GM12878 (cell line): ENCODE measurements at regions of chr2 and their contacts with region 1.

Region 1: DNA sequence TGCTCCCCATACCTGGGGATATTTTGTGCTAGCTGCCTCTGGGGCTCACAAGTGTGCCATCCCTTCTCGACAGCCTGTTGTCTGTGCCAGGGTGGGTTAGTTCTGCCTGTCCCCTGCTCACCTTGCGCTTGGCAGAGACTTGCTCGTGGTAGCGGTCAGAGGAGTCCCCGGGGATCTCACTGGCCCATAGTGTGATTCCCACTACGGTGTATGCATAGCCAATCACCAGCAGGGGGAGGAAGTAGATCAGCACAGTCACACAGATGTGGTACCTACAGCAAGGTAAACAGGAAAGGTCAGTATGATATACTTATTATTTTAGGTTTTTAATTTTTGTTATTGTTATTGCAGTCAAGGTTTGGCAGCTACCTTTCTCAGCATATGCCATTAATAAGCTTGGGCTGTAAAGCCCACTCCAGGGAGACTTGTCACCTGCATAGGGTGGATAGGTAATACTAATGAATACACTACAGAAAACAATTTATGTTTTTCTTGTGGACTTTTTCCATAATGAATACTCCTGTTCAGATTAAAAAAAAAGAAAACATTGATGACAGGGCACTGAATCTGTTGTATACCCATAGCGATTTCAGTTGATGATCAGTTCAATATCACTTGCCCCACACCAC is 95.2 kb downstream of the POLE4 start:
- DNase-seq: peak; percentile 69
- ATAC-seq: peak; percentile 78
- H3K4me3 ChIP-seq: no peak overlapping the region
- H3K27ac ChIP-seq: no peak overlapping the region
- H3K4me1 ChIP-seq: peaks cover 22% of the 10 kb centered on the region
- H3K27me3 ChIP-seq: no peaks in the 10 kb centered on the region
- CTCF ChIP-seq: peak; percentile 80 to 92 (median 88); a peak in 5 of 6 replicates
- EP300 ChIP-seq: no peak
- POLR2A ChIP-seq: no peak
- RAD21 ChIP-seq: peak; percentile 92

Region 2: GRCh38 chr2:74845217-74846011 is 208.2 kb before region 1 on chr2:
- CTCF ChIA-PET with region 1: no interaction called
- POLR2A ChIA-PET with region 1: no interaction called
- RAD21 ChIA-PET with region 1: no interaction called
- SMC1A ChIA-PET with region 1: no interaction called
- in situ Hi-C with region 1: no loop called
- intact Hi-C with region 1: no loop called
- DNase-seq: no peak
- ATAC-seq: no peak
- H3K4me3 ChIP-seq: no peak overlapping the region
- H3K27ac ChIP-seq: no peak overlapping the region
- H3K4me1 ChIP-seq: peaks cover 69% of the 10 kb centered on the region
- H3K27me3 ChIP-seq: no peaks in the 10 kb centered on the region
- CTCF ChIP-seq: no peak
- EP300 ChIP-seq: no peak
- POLR2A ChIP-seq: no peak
- RAD21 ChIP-seq: no peak

Region 3: DNA sequence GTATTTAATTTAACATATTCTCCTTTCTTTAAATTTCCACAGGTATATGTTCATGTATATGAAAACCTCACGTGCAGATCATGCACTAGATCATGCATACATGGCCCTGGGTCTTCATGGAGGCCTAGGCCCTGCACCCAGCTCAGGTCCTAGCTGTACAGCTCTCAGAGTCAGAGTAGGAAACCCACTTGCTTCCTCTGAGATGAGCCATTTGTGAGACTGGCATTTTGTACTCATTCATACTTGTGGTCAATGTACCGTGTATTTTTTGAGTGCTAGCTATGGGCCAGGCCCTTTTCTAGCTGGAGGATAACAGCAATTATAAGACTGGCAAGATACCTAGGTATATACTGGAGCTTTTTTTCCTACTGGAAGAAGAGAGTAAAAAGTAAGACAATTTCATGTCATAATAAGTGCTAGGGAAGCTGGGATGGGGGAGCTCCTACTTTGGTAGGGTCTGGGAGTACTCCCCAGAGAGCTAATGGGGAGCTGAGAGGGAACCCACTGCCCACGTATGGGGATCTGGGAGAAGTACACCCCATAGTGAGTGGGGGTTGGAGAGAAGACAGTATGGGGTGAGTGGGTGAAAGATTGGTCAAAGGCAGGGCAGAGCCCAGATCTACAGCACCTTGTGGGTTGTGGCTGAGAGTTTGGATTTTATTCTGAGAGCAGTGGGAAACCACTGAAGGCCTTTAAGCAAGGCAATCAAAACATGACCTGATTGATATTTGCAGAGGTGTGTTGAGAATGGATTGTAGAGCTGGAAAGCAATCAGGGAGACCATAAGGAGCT is 23.2 kb before region 1 on chr2:
- CTCF ChIA-PET with region 1: interaction called, 10 read pairs
- POLR2A ChIA-PET with region 1: no interaction called
- RAD21 ChIA-PET with region 1: no interaction called
- SMC1A ChIA-PET with region 1: interaction called, 3 read pairs
- in situ Hi-C with region 1: no loop called
- intact Hi-C with region 1: no loop called
- DNase-seq: no peak
- ATAC-seq: peak; percentile 63
- H3K4me3 ChIP-seq: no peak overlapping the region
- H3K27ac ChIP-seq: no peak overlapping the region
- H3K4me1 ChIP-seq: peaks cover 6% of the 10 kb centered on the region; the same call in 1 of the 2 replicates
- H3K27me3 ChIP-seq: no peaks in the 10 kb centered on the region
- CTCF ChIP-seq: no peak
- EP300 ChIP-seq: no peak
- POLR2A ChIP-seq: no peak
- RAD21 ChIP-seq: no peak

Region 4: GRCh38 chr2:75076088-75076487 is 22.5 kb after region 1 on chr2:
- CTCF ChIA-PET with region 1: interaction called, 16 read pairs
- POLR2A ChIA-PET with region 1: interaction called, 8 read pairs
- RAD21 ChIA-PET with region 1: interaction called, 50 read pairs
- SMC1A ChIA-PET with region 1: interaction called, 39 read pairs
- in situ Hi-C with region 1: no loop called
- intact Hi-C with region 1: no loop called
- DNase-seq: no peak
- ATAC-seq: no peak
- H3K4me3 ChIP-seq: no peak overlapping the region
- H3K27ac ChIP-seq: no peak overlapping the region
- H3K4me1 ChIP-seq: peaks cover 8% of the 10 kb centered on the region
- H3K27me3 ChIP-seq: no peaks in the 10 kb centered on the region
- CTCF ChIP-seq: no peak
- EP300 ChIP-seq: no peak
- POLR2A ChIP-seq: no peak
- RAD21 ChIP-seq: no peak

Region 5: DNA sequence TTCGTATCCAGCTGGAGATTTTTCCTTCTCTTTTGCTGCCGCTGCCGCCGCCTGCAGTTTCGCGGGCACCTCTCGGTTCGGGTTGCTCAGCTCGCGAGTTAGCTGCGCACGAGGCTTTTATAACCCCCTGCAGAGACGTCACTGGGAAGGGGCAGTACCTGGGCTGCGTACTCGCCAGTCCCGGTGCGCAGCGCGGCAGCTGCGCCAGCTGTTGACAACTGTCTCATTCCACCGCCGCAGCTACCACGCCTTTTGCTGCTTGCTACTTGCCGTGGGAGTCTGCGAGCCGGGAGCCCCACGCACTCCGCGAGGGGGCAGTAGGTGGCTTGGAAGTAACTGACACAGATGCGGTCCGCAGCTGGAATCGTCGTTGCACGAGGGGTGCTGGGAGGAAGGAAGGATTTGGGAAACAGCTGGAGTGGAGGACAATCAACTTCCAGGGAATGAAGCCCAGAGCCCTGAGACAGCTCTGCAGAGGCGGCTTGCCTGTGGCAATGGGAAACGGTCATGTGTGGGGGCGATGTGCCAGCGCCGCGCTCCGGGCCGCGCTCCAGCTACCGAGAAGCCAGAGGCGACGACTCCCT is 145.9 kb after region 1 on chr2 and contains the start of gene TACR1:
- CTCF ChIA-PET with region 1: interaction called, 23 read pairs
- POLR2A ChIA-PET with region 1: no interaction called
- RAD21 ChIA-PET with region 1: interaction called, 6 read pairs
- SMC1A ChIA-PET with region 1: interaction called, 4 read pairs
- in situ Hi-C with region 1: no loop called
- intact Hi-C with region 1: loop called (anchors 1 kb)
- DNase-seq: peak; percentile 35
- ATAC-seq: peak; percentile 91
- H3K4me3 ChIP-seq: peak within 1 kb of the TSS; percentile 57
- H3K27ac ChIP-seq: no peak within 1 kb of the TSS
- H3K4me1 ChIP-seq: peaks cover 4% of the 10 kb centered on the region; the same call in 1 of the 2 replicates
- H3K27me3 ChIP-seq: peaks cover 5 to 11% of the 10 kb centered on the region in 2 experiments
- CTCF ChIP-seq: peak; percentile 56 to 69 (median 64)
- EP300 ChIP-seq: 0 out of 4 replicates have a peak, but pooled peaks of 1 of the 2 experiments have one; percentile 22
- POLR2A ChIP-seq: no peak
- RAD21 ChIP-seq: peak; percentile 73
- polyA plus RNA-seq, gene TACR1: 0.04 to 0.05 TPM

Region 6: DNA sequence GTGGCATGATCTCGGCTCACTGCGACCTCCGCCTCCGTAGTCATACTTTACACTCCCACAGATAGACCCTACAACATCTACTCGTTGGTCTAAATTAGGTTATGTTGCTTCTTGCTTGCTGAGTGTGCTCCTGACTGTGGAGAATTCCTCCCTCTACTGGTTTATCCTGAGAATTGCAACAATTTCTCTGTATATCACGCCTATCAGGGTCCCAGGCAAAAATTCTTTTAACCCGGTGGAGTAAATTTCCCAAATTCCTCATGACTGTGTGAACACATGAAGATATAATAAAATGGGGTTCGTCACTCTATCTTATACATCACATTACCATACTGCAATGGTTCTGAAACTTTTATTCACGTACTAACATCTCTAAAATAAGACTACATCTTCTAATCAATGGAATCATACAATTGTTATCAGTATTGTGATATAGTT is 350.4 kb after region 1 on chr2:
- CTCF ChIA-PET with region 1: interaction called, 29 read pairs
- POLR2A ChIA-PET with region 1: interaction called, 4 read pairs
- RAD21 ChIA-PET with region 1: interaction called, 6 read pairs
- SMC1A ChIA-PET with region 1: interaction called, 20 read pairs
- in situ Hi-C with region 1: loop called (anchors 25 kb)
- intact Hi-C with region 1: loop called (anchors 1 kb)
- DNase-seq: peak; percentile 36
- ATAC-seq: peak; percentile 93
- H3K4me3 ChIP-seq: no peak overlapping the region
- H3K27ac ChIP-seq: no peak overlapping the region
- H3K4me1 ChIP-seq: no peaks in the 10 kb centered on the region; the same call in 1 of the 2 replicates
- H3K27me3 ChIP-seq: no peaks in the 10 kb centered on the region
- CTCF ChIP-seq: peak; percentile 73 to 85 (median 80)
- EP300 ChIP-seq: no peak
- POLR2A ChIP-seq: no peak
- RAD21 ChIP-seq: peak; percentile 90

Region 7: GRCh38 chr2:75627895-75628504 is 574.4 kb after region 1 on chr2:
- CTCF ChIA-PET with region 1: interaction called, 6 read pairs
- POLR2A ChIA-PET with region 1: no interaction called
- RAD21 ChIA-PET with region 1: interaction called, 7 read pairs
- SMC1A ChIA-PET with region 1: no interaction called
- in situ Hi-C with region 1: no loop called
- intact Hi-C with region 1: loop called (anchors 5 kb)
- DNase-seq: no peak
- ATAC-seq: peak; percentile 96
- H3K4me3 ChIP-seq: no peak overlapping the region
- H3K27ac ChIP-seq: no peak overlapping the region
- H3K4me1 ChIP-seq: no peaks in the 10 kb centered on the region
- H3K27me3 ChIP-seq: peaks cover 0 to 2% of the 10 kb centered on the region in 2 experiments; a peak in 1 of 4 replicates
- CTCF ChIP-seq: peak; percentile 86 to 97 (median 91)
- EP300 ChIP-seq: no peak
- POLR2A ChIP-seq: no peak
- RAD21 ChIP-seq: peak; percentile 80